ENCODE measurements at regions of chr14 and their contacts with region 1.

Region 1: DNA sequence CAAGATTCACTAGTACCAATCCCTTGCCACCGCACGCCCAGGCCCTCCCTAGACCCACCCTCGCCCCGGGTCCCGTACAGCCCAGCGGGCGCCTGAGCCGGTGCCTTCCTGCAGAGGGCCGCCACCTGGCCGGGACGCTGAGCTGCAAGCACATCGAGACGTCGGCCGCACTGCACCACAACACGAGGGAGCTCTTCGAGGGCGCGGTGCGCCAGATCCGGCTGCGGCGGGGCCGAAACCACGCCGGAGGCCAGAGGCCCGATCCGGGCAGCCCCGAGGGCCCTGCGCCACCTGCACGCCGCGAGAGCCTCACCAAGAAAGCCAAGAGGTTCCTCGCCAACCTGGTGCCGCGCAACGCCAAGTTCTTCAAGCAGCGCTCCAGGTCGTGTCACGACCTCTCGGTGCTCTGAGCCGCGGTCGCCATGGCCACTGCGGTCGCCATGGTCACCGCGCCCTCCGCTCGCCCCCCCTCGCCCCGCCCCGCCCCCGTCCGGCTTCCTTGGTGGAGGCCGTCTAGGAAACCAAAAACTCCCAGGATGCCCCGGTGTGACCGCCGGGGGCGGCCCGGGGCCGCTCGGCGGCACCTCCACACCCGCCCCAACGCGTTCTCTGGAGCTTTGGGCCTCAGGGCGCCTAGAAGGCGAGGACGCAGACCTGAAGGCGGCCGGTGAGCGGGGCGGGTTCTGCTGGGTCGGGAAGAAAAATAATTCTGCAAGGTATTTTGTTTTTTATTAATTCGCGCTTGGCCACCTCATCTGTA is 3.7 kb downstream of the REM2 start:
- DNase-seq: peak; percentile 87
- H3K4me3 Mint-ChIP-seq: peak overlapping the region; percentile 83
- H3K27ac Mint-ChIP-seq: peak overlapping the region; percentile 84
- H3K4me1 Mint-ChIP-seq: peaks cover 50% of the 10 kb centered on the region
- H3K27me3 Mint-ChIP-seq: peaks cover 2% of the 10 kb centered on the region

Region 2: DNA sequence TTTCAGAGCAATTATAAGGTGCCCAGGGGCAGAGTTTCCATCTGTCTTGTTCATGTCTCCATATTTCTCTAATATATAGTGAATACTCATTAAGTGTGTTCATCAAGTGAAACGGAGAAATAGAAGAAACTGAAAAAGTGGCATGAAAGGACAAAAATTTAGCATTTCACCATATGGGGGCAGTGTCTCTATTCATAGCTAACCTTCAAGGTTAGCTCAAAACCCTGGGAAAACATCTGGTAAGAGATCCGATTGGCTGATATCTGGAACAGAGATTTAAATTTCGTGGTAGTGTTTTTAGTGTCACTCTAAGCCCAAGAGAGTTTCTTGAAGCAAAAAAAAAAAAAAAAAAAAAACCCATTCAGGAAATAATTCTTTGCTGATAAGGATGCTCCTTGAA is 665.2 kb before region 1 on chr14:
- CTCF ChIA-PET with region 1: no interaction called
- intact Hi-C with region 1: no loop called
- DNase-seq: no peak
- H3K4me3 Mint-ChIP-seq: peak overlapping the region; percentile 69
- H3K27ac Mint-ChIP-seq: peak overlapping the region; percentile 72
- H3K4me1 Mint-ChIP-seq: peaks cover 7% of the 10 kb centered on the region
- H3K27me3 Mint-ChIP-seq: no peaks in the 10 kb centered on the region

Region 3: GRCh38 chr14:22829661-22830442 is 56.8 kb before region 1 on chr14 and contains the start of gene MRPL52:
- CTCF ChIA-PET with region 1: no interaction called
- intact Hi-C with region 1: loop called (anchors 2 kb)
- DNase-seq: peak; percentile 94
- H3K4me3 Mint-ChIP-seq: peak within 1 kb of the TSS; percentile 94
- H3K27ac Mint-ChIP-seq: peak within 1 kb of the TSS; percentile 97
- H3K4me1 Mint-ChIP-seq: peaks cover 34% of the 10 kb centered on the region
- H3K27me3 Mint-ChIP-seq: no peaks in the 10 kb centered on the region
- total RNA-seq, gene MRPL52: 170 TPM

Region 4: GRCh38 chr14:22900081-22900799 is 13.6 kb after region 1 on chr14:
- CTCF ChIA-PET with region 1: interaction called, 72 read pairs
- intact Hi-C with region 1: loop called (anchors 1 kb)
- DNase-seq: peak; percentile 64
- H3K4me3 Mint-ChIP-seq: no peak overlapping the region
- H3K27ac Mint-ChIP-seq: no peak overlapping the region
- H3K4me1 Mint-ChIP-seq: peaks cover 12% of the 10 kb centered on the region
- H3K27me3 Mint-ChIP-seq: no peaks in the 10 kb centered on the region

Measured in activated naive CD4-positive, alpha-beta T cell treated with anti-CD3 and anti-CD28 coated beads for 36 hours (primary cell).